CD14-positive monocyte (primary cell): ENCODE measurements at regions of chr17 and their contacts with region 1.

Region 1: DNA sequence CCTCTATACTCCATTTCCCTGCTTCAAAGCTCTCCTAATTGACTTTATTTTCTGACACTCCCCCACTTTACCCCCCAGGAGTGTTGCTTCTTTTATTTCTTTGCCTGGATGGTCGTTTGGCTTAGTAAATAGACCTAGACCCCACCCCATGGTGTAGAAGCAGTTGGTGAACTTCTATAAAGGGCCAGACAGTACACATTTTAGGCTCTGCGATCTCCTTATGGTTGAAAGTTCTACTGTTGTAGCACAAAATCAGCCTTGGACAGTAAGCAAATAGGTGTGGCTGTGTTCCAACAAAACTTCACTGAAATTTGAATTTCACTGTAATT is 31.9 kb downstream of the ZNF287 start:
- DNase-seq: no peak
- H3K4me3 ChIP-seq: no peak overlapping the region
- H3K4me3 Mint-ChIP-seq: no peak overlapping the region
- H3K27ac ChIP-seq: no peak overlapping the region
- H3K27ac Mint-ChIP-seq: no peak overlapping the region
- H3K4me1 ChIP-seq: peaks cover 6 to 17% of the 10 kb centered on the region in 2 donors
- H3K4me1 Mint-ChIP-seq: peaks cover 18% of the 10 kb centered on the region
- H3K27me3 ChIP-seq: no peaks in the 10 kb centered on the region
- H3K27me3 Mint-ChIP-seq: peaks cover 0 to 5% (median 4%) of the 10 kb centered on the region in 3 donors
- CTCF ChIP-seq: peak; percentile 47

Region 2: GRCh38 chr17:16589097-16589969 is 52.2 kb after region 1 on chr17:
- intact Hi-C with region 1: loop called in 1 of 2 experiments (anchors 2 kb)
- DNase-seq: peak; percentile 82 to 91 (median 88)
- H3K4me3 ChIP-seq: peak overlapping the region; percentile 28 to 77 (median 56)
- H3K4me3 Mint-ChIP-seq: peak overlapping the region; percentile 74 to 84
- H3K27ac ChIP-seq: no peak overlapping the region
- H3K27ac Mint-ChIP-seq: no peak overlapping the region
- H3K4me1 ChIP-seq: peaks cover 12 to 13% of the 10 kb centered on the region in 2 donors
- H3K4me1 Mint-ChIP-seq: peaks cover 24% of the 10 kb centered on the region
- H3K27me3 ChIP-seq: peaks cover 15 to 34% of the 10 kb centered on the region in 2 donors
- H3K27me3 Mint-ChIP-seq: peaks cover 33 to 43% (median 34%) of the 10 kb centered on the region in 3 donors
- CTCF ChIP-seq: peak; percentile 95

Region 3: GRCh38 chr17:16873174-16874035 is 336.3 kb after region 1 on chr17:
- intact Hi-C with region 1: loop called in 1 of 2 experiments (anchors 5 kb)
- DNase-seq: peak in 2 of 3 donors; percentile 2 to 11
- H3K4me3 ChIP-seq: no peak overlapping the region
- H3K4me3 Mint-ChIP-seq: no peak overlapping the region
- H3K27ac ChIP-seq: no peak overlapping the region
- H3K27ac Mint-ChIP-seq: no peak overlapping the region
- H3K4me1 ChIP-seq: no peaks in the 10 kb centered on the region
- H3K4me1 Mint-ChIP-seq: no peaks in the 10 kb centered on the region
- H3K27me3 ChIP-seq: no peaks in the 10 kb centered on the region
- H3K27me3 Mint-ChIP-seq: peaks cover 0 to 5% (median 5%) of the 10 kb centered on the region in 3 donors
- CTCF ChIP-seq: peak; percentile 66

Region 4: GRCh38 chr17:16991349-16992009 is 454.4 kb after region 1 on chr17:
- intact Hi-C with region 1: loop called in 1 of 2 experiments (anchors 5 kb)
- DNase-seq: peak; percentile 61 to 71 (median 70)
- H3K4me3 ChIP-seq: no peak overlapping the region
- H3K4me3 Mint-ChIP-seq: no peak overlapping the region
- H3K27ac ChIP-seq: no peak overlapping the region
- H3K27ac Mint-ChIP-seq: peak overlapping the region in 1 of 7 donors; percentile 70
- H3K4me1 ChIP-seq: peaks cover 35 to 46% of the 10 kb centered on the region in 2 donors
- H3K4me1 Mint-ChIP-seq: peaks cover 40% of the 10 kb centered on the region
- H3K27me3 ChIP-seq: no peaks in the 10 kb centered on the region
- H3K27me3 Mint-ChIP-seq: peaks cover 0 to 6% (median 2%) of the 10 kb centered on the region in 3 donors
- CTCF ChIP-seq: peak; percentile 82